ENCODE measurements at regions of chr17 and their contacts with region 1.

Region 1: DNA sequence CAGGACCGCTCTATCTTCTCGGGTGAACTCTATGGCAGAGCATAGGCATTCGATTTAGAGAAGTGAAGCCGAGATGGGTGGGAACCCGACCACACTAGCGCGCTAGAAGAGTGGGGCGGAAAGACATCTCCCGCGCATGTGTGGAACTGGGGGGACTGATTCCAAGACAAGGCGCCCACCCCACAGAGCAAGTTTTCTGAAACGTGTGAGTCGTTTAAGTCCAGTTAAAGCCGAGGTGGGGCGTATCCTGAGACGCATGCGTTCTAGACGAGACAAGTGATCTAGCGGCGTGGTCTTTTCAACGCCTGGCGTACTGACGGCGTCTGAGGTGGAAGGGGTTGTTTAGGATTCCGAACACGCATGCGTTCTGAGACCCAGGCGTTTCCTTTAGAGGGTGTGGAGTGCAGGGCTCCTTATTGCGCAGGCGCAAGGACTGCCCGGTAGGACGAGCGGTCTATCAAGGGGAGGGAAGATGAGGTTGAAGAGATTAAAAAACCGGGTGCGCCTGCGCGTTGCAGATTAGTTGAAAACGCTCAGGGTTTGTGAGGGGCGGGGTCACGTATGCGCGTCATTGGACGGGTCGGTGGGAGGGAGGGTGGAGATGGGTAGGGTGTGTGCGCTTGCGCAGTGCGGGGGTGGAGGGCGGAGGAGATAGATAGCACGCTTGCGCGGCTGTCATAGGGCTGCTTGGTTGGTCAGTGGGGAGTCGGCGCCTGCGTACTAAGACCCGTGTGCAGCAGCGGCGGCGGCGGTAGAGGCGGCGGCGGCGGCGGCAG is at the start of gene EIF5A:
- DNase-seq: peak; percentile 100
- ATAC-seq: peak; percentile 68
- H3K4me3 ChIP-seq: peak within 1 kb of the TSS; percentile 76
- H3K4me3 Mint-ChIP-seq: peak within 1 kb of the TSS; percentile 92
- H3K27ac ChIP-seq: peak within 1 kb of the TSS; percentile 97 to 99
- H3K27ac Mint-ChIP-seq: peak within 1 kb of the TSS; percentile 98
- H3K4me1 ChIP-seq: peaks cover 39% of the 10 kb centered on the region
- H3K4me1 Mint-ChIP-seq: peaks cover 44% of the 10 kb centered on the region
- H3K27me3 ChIP-seq: no peaks in the 10 kb centered on the region
- H3K27me3 Mint-ChIP-seq: no peaks in the 10 kb centered on the region
- CTCF ChIP-seq: no peak
- total RNA-seq, gene EIF5A: 471 to 480 TPM

Region 2: GRCh38 chr17:7219812-7220581 is 87.1 kb before region 1 on chr17 and contains the starts of genes ACADVL and DLG4:
- CTCF ChIA-PET with region 1: interaction called, 4 read pairs
- POLR2A ChIA-PET with region 1: no interaction called
- intact Hi-C with region 1: loop called in 1 of 2 experiments (anchors 5 kb)
- DNase-seq: peak; percentile 53 to 86 (median 74)
- ATAC-seq: peak; percentile 50
- H3K4me3 ChIP-seq: peak within 1 kb of the TSS; percentile 70
- H3K4me3 Mint-ChIP-seq: peak within 1 kb of the TSS; percentile 95
- H3K27ac ChIP-seq: peak within 1 kb of the TSS; percentile 75 to 79
- H3K27ac Mint-ChIP-seq: peak within 1 kb of the TSS; percentile 76
- H3K4me1 ChIP-seq: peaks cover 61% of the 10 kb centered on the region
- H3K4me1 Mint-ChIP-seq: peaks cover 54% of the 10 kb centered on the region
- H3K27me3 ChIP-seq: no peaks in the 10 kb centered on the region
- H3K27me3 Mint-ChIP-seq: no peaks in the 10 kb centered on the region
- CTCF ChIP-seq: no peak
- total RNA-seq, gene ACADVL: 237 to 257 TPM
- total RNA-seq, gene DLG4: 10.2 to 11.0 TPM

Region 3: DNA sequence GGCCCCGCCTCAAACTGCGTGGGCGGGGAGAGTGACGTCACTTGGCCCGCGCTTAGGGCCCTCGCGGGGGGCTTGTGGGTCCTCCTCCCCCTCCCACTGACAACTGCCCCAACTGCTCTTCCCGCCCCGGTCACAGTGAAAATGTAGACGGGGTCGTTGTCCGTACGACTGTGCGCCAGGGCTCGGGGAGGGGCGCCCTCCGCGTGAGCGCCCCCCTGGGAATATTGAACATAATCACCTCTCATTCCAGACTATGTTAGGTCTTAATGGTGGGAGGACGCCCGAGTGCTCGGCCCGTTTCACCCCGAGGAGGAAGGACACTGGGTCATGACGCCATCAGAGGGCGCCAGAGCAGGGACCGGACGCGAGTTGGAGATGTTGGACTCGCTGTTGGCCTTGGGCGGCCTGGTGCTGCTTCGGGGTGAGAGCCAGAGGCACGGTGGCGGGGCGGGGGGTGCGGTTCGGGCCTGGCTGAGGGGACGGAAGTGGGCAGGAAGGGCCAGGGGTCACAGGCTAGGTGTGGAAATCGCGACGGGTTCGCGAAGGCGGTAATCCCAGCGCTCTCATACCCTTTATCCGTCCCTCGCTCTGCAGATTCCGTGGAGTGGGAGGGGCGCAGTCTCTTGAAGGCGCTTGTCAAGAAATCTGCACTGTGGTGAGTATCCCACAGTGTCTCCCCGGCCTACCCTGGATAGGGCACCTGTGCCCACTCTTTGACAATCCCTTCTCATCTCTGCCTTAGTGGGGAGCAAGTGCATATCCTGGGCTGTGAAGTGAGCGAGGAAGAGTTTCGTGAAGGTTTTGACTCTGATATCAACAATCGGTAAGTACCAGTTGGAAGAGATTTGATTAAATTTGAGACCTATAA is 54.7 kb before region 1 on chr17 and contains the start of gene ELP5:
- CTCF ChIA-PET with region 1: no interaction called
- POLR2A ChIA-PET with region 1: interaction called, 4 read pairs
- intact Hi-C with region 1: loop called (anchors 1 to 5 kb)
- DNase-seq: peak; percentile 64 to 99 (median 80)
- ATAC-seq: peak; percentile 39
- H3K4me3 ChIP-seq: peak within 1 kb of the TSS; percentile 71
- H3K4me3 Mint-ChIP-seq: peak within 1 kb of the TSS; percentile 94
- H3K27ac ChIP-seq: peak within 1 kb of the TSS; percentile 99
- H3K27ac Mint-ChIP-seq: peak within 1 kb of the TSS; percentile 100
- H3K4me1 ChIP-seq: peaks cover 36% of the 10 kb centered on the region
- H3K4me1 Mint-ChIP-seq: peaks cover 45% of the 10 kb centered on the region
- H3K27me3 ChIP-seq: no peaks in the 10 kb centered on the region
- H3K27me3 Mint-ChIP-seq: no peaks in the 10 kb centered on the region
- CTCF ChIP-seq: peak; percentile 28
- total RNA-seq, gene ELP5: 20.1 to 21.3 TPM

Region 4: GRCh38 chr17:7329374-7329996 is 22.4 kb after region 1 on chr17:
- CTCF ChIA-PET with region 1: interaction called, 4 read pairs
- POLR2A ChIA-PET with region 1: interaction called, 52 read pairs
- intact Hi-C with region 1: no loop called
- DNase-seq: peak; percentile 90 to 99 (median 94)
- ATAC-seq: peak; percentile 73
- H3K4me3 ChIP-seq: peak overlapping the region; percentile 64
- H3K4me3 Mint-ChIP-seq: peak overlapping the region; percentile 90
- H3K27ac ChIP-seq: peak overlapping the region; percentile 80 to 92
- H3K27ac Mint-ChIP-seq: peak overlapping the region; percentile 88
- H3K4me1 ChIP-seq: peaks cover 58% of the 10 kb centered on the region
- H3K4me1 Mint-ChIP-seq: peaks cover 47% of the 10 kb centered on the region
- H3K27me3 ChIP-seq: no peaks in the 10 kb centered on the region
- H3K27me3 Mint-ChIP-seq: no peaks in the 10 kb centered on the region
- CTCF ChIP-seq: no peak

Region 5: GRCh38 chr17:7336240-7337175 is 29.4 kb after region 1 on chr17 and contains the start of gene ACAP1:
- CTCF ChIA-PET with region 1: interaction called, 4 read pairs
- POLR2A ChIA-PET with region 1: interaction called, 52 read pairs
- intact Hi-C with region 1: no loop called
- DNase-seq: peak; percentile 75 to 95 (median 90)
- ATAC-seq: peak; percentile 96
- H3K4me3 ChIP-seq: peak within 1 kb of the TSS; percentile 91
- H3K4me3 Mint-ChIP-seq: peak within 1 kb of the TSS; percentile 89
- H3K27ac ChIP-seq: peak within 1 kb of the TSS; percentile 55 to 64
- H3K27ac Mint-ChIP-seq: peak within 1 kb of the TSS; percentile 91
- H3K4me1 ChIP-seq: peaks cover 88% of the 10 kb centered on the region
- H3K4me1 Mint-ChIP-seq: peaks cover 52% of the 10 kb centered on the region
- H3K27me3 ChIP-seq: no peaks in the 10 kb centered on the region
- H3K27me3 Mint-ChIP-seq: no peaks in the 10 kb centered on the region
- CTCF ChIP-seq: no peak
- total RNA-seq, gene ACAP1: 565 to 575 TPM

Region 6: DNA sequence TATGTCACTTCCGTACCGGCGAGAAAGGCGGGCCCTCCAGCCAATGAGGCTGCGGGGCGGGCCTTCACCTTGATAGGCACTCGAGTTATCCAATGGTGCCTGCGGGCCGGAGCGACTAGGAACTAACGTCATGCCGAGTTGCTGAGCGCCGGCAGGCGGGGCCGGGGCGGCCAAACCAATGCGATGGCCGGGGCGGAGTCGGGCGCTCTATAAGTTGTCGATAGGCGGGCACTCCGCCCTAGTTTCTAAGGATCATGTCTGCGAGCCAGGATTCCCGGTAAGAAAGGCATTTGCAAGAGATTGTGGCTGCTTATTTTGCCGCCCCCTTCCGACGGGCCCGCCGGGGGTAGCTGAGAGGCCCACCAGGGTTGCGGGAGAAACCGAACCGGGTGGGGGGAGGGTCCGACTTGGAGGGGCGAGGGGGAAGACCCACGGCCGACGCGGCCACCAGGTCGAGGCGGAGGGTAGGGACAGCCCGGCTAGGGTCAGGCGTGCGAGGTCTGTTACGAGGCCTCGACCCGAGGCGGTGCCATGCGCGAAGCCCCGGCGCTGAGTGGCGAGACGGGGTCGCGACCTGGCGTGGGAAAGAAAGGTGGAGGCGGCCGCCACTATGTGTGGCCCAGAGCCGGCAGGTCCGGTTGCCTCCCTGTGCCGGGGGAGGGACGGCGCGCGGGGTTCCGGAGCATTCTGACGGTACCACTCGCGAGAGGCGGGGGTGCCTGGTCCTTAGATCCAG is 265.7 kb after region 1 on chr17:
- CTCF ChIA-PET with region 1: no interaction called
- POLR2A ChIA-PET with region 1: no interaction called
- intact Hi-C with region 1: loop called in 1 of 2 experiments (anchors 2 kb)
- DNase-seq: peak; percentile 99 to 100 (median 100)
- ATAC-seq: peak; percentile 83
- H3K4me3 ChIP-seq: peak overlapping the region; percentile 100
- H3K4me3 Mint-ChIP-seq: peak overlapping the region; percentile 99
- H3K27ac ChIP-seq: peak overlapping the region; percentile 96 to 98
- H3K27ac Mint-ChIP-seq: peak overlapping the region; percentile 99
- H3K4me1 ChIP-seq: peaks cover 50% of the 10 kb centered on the region
- H3K4me1 Mint-ChIP-seq: peaks cover 52% of the 10 kb centered on the region
- H3K27me3 ChIP-seq: no peaks in the 10 kb centered on the region
- H3K27me3 Mint-ChIP-seq: peaks cover 3% of the 10 kb centered on the region
- CTCF ChIP-seq: no peak

Measured in CD4-positive, alpha-beta T cell (primary cell).